ENCODE measurements at regions of chr2 and their contacts with region 1.

Region 1: DNA sequence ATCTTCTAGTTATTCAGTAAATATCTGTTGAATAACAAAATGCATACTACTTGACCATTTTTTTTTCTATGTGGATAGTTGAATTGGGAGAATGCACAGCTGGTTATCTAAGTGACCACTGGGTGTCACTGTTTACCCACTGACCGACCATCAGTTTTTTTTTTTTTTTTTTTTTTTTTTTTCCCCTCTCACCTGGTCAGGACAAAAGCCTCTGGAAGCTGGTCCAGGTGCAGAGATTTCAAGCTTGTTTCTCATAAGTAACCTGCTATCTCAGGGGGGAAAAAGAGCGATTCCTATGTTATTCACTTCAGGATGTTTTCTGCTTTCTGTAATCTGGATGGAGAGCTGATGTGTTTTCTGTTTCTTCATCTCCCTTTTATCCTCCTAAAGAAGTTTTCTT is 256.0 kb downstream of the DCDC2C start:
- DNase-seq: peak; percentile 31
- ATAC-seq: peak; percentile 74
- H3K4me3 ChIP-seq: no peak overlapping the region
- H3K27ac ChIP-seq: no peak overlapping the region
- H3K4me1 ChIP-seq: no peaks in the 10 kb centered on the region
- H3K27me3 ChIP-seq: peaks cover 3 to 17% of the 10 kb centered on the region in 2 experiments; a peak in 4 of 5 replicates
- CTCF ChIP-seq: peak; percentile 76
- EP300 ChIP-seq: no peak
- POLR2A ChIP-seq: no peak
- RAD21 ChIP-seq: peak; percentile 53

Region 2: DNA sequence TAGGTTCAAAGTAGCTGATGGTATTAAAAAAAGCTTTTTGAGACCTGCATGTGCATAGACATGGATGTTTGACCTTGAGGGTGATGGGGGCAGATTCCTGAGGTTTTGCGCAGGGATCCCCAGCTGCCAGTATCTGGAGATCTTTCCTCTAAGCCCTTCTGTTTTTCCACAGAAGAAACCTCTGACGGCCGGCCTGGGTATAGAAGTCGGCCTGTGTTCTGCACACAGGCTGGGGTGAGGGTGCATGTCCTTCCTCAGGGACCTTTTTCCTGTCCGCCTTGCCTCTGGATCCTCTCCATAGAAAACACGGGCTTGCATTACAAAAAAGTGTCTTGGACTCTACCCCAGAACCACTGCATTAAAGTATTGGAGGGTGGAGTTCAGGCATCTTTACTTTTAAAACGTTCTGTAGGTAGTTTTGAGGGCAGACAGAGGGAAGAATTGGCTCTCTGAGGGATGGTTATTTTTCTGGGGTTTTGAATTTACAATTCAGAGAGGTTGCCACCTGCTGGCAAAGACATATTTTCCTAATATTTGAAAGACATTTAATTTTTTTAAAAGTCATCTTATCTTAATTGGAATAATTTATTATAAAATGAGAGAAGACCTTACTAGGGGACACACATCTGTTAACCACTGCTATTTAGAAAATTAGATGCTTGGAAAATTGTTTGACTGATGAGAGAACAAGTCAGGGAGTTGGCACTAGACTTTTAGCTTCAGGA is 94.6 kb after region 1 on chr2:
- CTCF ChIA-PET with region 1: interaction called, 15 read pairs
- POLR2A ChIA-PET with region 1: no interaction called
- in situ Hi-C with region 1: no loop called
- intact Hi-C with region 1: no loop called
- DNase-seq: no peak
- ATAC-seq: no peak
- H3K4me3 ChIP-seq: no peak overlapping the region
- H3K27ac ChIP-seq: no peak overlapping the region
- H3K4me1 ChIP-seq: no peaks in the 10 kb centered on the region
- H3K27me3 ChIP-seq: no peaks in the 10 kb centered on the region; a peak in 1 of 5 replicates
- CTCF ChIP-seq: no peak
- EP300 ChIP-seq: no peak
- POLR2A ChIP-seq: no peak
- RAD21 ChIP-seq: no peak

Region 3: DNA sequence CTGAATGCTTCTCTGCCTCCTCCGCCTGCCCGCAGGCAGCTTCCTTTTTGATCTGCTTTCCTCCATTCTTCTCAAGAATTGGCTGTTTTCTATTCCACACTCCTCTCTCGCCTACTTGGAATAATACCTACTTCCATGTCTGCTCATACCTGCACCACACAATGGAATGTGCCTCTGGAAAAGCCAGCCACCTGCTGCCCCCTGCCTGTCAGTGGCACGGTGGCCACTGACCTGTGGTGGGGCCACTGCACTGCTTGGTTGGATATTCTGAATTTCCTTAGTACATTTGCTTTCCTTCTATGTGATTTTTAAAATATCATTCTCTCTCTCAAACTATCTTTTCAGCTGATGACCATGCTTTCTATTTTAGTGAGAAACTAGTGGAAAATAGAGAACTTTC is 150.9 kb after region 1 on chr2:
- CTCF ChIA-PET with region 1: interaction called, 5 read pairs
- POLR2A ChIA-PET with region 1: no interaction called
- in situ Hi-C with region 1: no loop called
- intact Hi-C with region 1: loop called (anchors 1 kb)
- DNase-seq: no peak
- ATAC-seq: peak; percentile 92
- H3K4me3 ChIP-seq: no peak overlapping the region
- H3K27ac ChIP-seq: no peak overlapping the region
- H3K4me1 ChIP-seq: no peaks in the 10 kb centered on the region
- H3K27me3 ChIP-seq: no peaks in the 10 kb centered on the region
- CTCF ChIP-seq: peak; percentile 57
- EP300 ChIP-seq: no peak
- POLR2A ChIP-seq: no peak
- RAD21 ChIP-seq: no peak

Region 4: GRCh38 chr2:4715069-4715468 is 755.7 kb after region 1 on chr2:
- CTCF ChIA-PET with region 1: no interaction called
- POLR2A ChIA-PET with region 1: no interaction called
- in situ Hi-C with region 1: no loop called
- intact Hi-C with region 1: loop called (anchors 5 kb)
- DNase-seq: no peak
- ATAC-seq: no peak
- H3K4me3 ChIP-seq: no peak overlapping the region
- H3K27ac ChIP-seq: no peak overlapping the region
- H3K4me1 ChIP-seq: no peaks in the 10 kb centered on the region
- H3K27me3 ChIP-seq: no peaks in the 10 kb centered on the region
- CTCF ChIP-seq: no peak
- EP300 ChIP-seq: no peak
- POLR2A ChIP-seq: no peak
- RAD21 ChIP-seq: no peak

Region 5: DNA sequence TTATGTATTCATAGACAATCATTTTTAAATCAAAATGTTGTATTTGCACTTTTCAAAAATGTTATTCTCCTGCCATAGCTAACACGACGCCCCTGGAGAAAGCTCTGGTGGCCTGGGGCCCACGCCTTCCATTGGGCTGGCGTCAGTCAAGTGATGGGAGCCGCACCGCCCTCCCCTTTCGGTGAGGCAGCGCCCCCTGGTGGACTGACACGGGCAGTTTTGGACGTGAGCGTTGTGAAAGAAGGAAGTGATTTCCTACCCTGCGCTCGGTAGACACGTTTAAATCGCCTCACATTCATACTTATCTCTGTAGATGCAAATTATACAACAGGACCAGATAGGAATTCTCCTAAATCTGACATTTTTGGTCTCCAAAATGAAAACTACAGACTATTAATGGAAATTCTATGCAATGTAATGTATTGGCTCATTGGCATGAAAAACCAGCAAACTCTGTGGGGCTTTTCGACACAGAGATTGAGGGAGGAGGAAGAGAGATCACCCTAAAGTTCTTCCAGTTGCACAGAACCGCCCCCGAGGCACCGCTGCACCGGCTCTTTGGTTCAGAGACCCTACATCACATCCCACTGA is 1406.6 kb after region 1 on chr2:
- CTCF ChIA-PET with region 1: interaction called, 14 read pairs
- POLR2A ChIA-PET with region 1: no interaction called
- in situ Hi-C with region 1: loop called (anchors 10 kb)
- intact Hi-C with region 1: no loop called
- DNase-seq: peak; percentile 62
- ATAC-seq: peak; percentile 99
- H3K4me3 ChIP-seq: no peak overlapping the region
- H3K27ac ChIP-seq: no peak overlapping the region
- H3K4me1 ChIP-seq: no peaks in the 10 kb centered on the region
- H3K27me3 ChIP-seq: no peaks in the 10 kb centered on the region; a peak in 1 of 5 replicates
- CTCF ChIP-seq: peak; percentile 93
- EP300 ChIP-seq: no peak
- POLR2A ChIP-seq: no peak
- RAD21 ChIP-seq: peak; percentile 65